Caco-2 (cell line): ENCODE measurements at regions of chrX and their contacts with region 1.

Region 1: GRCh38 chrX:131392666-131393065 is 103.6 kb upstream of the IGSF1 start:
- DNase-seq: no peak
- H3K4me3 ChIP-seq: no peak overlapping the region
- H3K4me3 Mint-ChIP-seq: no peak overlapping the region
- H3K27ac Mint-ChIP-seq: no peak overlapping the region
- H3K4me1 ChIP-seq: no peaks in the 10 kb centered on the region
- H3K4me1 Mint-ChIP-seq: no peaks in the 10 kb centered on the region
- H3K27me3 ChIP-seq: no peaks in the 10 kb centered on the region
- H3K27me3 Mint-ChIP-seq: no peaks in the 10 kb centered on the region
- CTCF ChIP-seq: no peak

Region 2: GRCh38 chrX:131331152-131331551 is 61.5 kb before region 1 on chrX:
- CTCF ChIA-PET with region 1: no interaction called
- POLR2A ChIA-PET with region 1: no interaction called
- intact Hi-C with region 1: loop called (anchors 2 kb)
- DNase-seq: no peak
- H3K4me3 ChIP-seq: no peak overlapping the region
- H3K4me3 Mint-ChIP-seq: no peak overlapping the region
- H3K27ac Mint-ChIP-seq: no peak overlapping the region
- H3K4me1 ChIP-seq: no peaks in the 10 kb centered on the region
- H3K4me1 Mint-ChIP-seq: no peaks in the 10 kb centered on the region
- H3K27me3 ChIP-seq: no peaks in the 10 kb centered on the region
- H3K27me3 Mint-ChIP-seq: no peaks in the 10 kb centered on the region
- CTCF ChIP-seq: no peak

Region 3: DNA sequence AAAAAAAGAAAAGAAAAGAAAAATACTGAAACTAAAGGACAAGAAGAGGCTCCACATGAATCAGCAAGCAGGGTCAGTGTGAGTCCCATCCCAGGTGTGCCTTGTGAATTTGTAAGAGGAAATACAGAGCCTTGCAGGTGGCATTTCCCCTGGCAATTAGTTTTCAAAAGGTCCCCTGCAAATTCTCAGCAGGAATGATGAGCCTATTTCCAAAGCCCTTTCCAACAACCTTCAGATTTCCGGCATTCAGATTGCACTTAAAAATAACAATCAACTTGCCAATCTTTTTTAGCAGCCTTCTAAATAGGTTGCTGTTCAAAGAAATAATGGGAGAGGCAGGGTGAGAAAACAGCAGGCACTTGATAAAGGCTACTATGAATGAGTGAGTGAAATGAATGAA is 84.8 kb after region 1 on chrX:
- CTCF ChIA-PET with region 1: no interaction called
- POLR2A ChIA-PET with region 1: no interaction called
- intact Hi-C with region 1: no loop called
- DNase-seq: no peak
- H3K4me3 ChIP-seq: no peak overlapping the region
- H3K4me3 Mint-ChIP-seq: no peak overlapping the region
- H3K27ac Mint-ChIP-seq: no peak overlapping the region
- H3K4me1 ChIP-seq: no peaks in the 10 kb centered on the region
- H3K4me1 Mint-ChIP-seq: no peaks in the 10 kb centered on the region
- H3K27me3 ChIP-seq: no peaks in the 10 kb centered on the region
- H3K27me3 Mint-ChIP-seq: no peaks in the 10 kb centered on the region
- CTCF ChIP-seq: no peak